H1 (cell line): ENCODE measurements at regions of chr15 and their contacts with region 1.

Region 1: GRCh38 chr15:66841953-66842681 is 140.1 kb downstream of the SMAD6 start:
- DNase-seq: no peak
- H3K4me3 ChIP-seq: peak overlapping the region; percentile 26 to 61 (median 37)
- H3K27ac ChIP-seq: no peak overlapping the region
- H3K4me1 ChIP-seq: peaks cover 0 to 9% (median 4%) of the 10 kb centered on the region in 4 experiments; a peak in 4 of 7 replicates
- H3K27me3 ChIP-seq: peaks cover 7 to 36% (median 29%) of the 10 kb centered on the region in 4 experiments
- CTCF ChIP-seq: no peak
- EP300 ChIP-seq: no peak
- POLR2A ChIP-seq: no peak
- RAD21 ChIP-seq: no peak

Region 2: DNA sequence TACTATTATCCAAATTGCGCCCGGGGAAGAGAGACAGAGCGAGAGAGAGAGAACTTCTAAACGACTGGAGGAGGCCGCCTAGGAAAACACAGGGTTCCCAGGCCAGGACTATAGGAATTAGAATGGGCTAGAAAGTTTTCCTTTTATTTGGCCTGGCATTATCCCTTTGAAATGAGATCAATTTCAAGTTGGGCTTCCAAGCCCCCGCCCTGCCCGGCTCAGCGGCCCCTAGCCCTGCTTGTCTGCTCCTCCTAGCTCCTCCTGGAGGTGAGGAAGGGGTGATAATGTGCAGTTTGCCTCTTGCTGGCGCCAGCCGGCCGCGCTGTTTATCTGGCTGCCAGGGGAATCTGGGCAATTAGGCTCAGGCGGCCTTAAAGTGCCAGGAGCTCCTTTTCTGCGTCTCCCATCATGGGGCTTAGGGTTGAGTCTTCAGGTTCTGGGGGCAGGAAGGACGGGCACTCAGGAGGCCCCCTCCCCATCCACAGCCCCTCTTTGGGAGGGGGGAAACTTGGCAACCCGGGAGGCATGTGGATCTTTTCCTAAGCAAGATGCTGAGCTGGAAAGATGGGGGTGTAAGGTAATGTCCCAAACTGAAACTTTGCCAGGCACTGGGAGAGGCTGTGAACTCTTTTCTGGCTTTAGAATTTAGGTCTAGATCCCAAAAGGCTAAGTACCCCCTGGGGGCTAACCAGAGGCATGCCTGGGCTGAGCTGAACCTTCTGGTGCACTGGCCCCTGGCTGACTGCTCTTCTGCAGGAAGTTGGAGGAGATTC is 134.6 kb before region 1 on chr15:
- CTCF ChIA-PET with region 1: interaction called, 11 read pairs
- POLR2A ChIA-PET with region 1: no interaction called
- DNase-seq: peak; percentile 70 to 74
- H3K4me3 ChIP-seq: no peak overlapping the region; a peak in 1 of 8 replicates
- H3K27ac ChIP-seq: no peak overlapping the region
- H3K4me1 ChIP-seq: peaks cover 0 to 25% (median 14%) of the 10 kb centered on the region in 4 experiments; a peak in 6 of 7 replicates
- H3K27me3 ChIP-seq: peaks cover 18 to 34% (median 27%) of the 10 kb centered on the region in 4 experiments; a peak in 6 of 7 replicates
- CTCF ChIP-seq: peak; percentile 57 to 72 (median 61)
- EP300 ChIP-seq: no peak
- POLR2A ChIP-seq: no peak
- RAD21 ChIP-seq: peak; percentile 53 to 70

Region 3: DNA sequence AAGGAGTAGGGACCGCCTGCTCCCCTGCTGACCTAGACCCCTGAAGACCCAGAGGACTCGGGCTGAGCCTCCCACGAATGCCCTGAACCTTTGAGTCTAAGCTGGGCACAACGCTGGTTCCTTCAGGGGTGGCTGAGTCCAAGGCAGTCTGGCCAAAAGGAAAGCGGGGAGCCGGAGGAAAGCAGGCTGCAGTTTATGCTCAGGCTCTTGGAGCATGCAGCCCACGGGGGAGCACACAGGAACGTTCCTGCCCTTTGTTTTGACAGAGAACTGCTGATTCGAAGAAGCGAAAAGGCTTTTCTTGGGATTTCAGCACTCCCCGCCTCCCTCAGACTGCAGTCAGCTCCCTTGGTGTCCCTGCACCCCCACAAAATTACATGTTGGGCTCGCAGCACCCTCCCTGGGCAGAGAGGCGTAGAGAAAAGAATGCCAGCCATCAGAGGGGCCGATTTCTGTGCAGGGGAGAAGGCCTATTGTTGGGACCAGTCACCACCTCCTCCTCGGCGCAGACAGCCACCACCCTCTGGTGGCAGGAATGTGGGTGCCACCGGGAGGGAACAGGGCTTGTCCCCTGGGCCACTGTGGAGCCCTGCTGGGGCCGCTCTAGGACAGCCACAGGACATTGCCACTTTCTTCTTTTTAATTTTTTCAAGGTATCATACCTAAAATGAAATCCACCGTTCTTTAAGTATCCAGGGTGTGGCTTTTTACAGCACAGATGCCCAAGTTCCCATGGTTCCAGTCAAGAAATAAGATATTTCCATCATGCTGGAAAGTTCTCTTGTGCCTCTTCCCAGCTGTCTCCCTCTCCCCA is 67.9 kb before region 1 on chr15:
- CTCF ChIA-PET with region 1: interaction called, 202 read pairs
- POLR2A ChIA-PET with region 1: no interaction called
- DNase-seq: peak; percentile 68 to 95
- H3K4me3 ChIP-seq: peak overlapping the region in 1 of 4 experiments; percentile 23; a peak in 3 of 8 replicates
- H3K27ac ChIP-seq: peak overlapping the region; percentile 56
- H3K4me1 ChIP-seq: peaks cover 11 to 24% (median 18%) of the 10 kb centered on the region in 4 experiments
- H3K27me3 ChIP-seq: no peaks in the 10 kb centered on the region
- CTCF ChIP-seq: peak; percentile 94 to 95 (median 95)
- EP300 ChIP-seq: peak in 1 of 2 experiments; percentile 60; a peak in 1 of 3 replicates
- POLR2A ChIP-seq: no peak
- RAD21 ChIP-seq: peak; percentile 87 to 92

Region 4: GRCh38 chr15:66808181-66808825 is 33.8 kb before region 1 on chr15:
- CTCF ChIA-PET with region 1: interaction called, 14 read pairs
- POLR2A ChIA-PET with region 1: no interaction called
- DNase-seq: no peak
- H3K4me3 ChIP-seq: no peak overlapping the region
- H3K27ac ChIP-seq: no peak overlapping the region
- H3K4me1 ChIP-seq: peaks cover 0 to 4% (median 4%) of the 10 kb centered on the region in 4 experiments; a peak in 4 of 7 replicates
- H3K27me3 ChIP-seq: peaks cover 0 to 2% (median 0%) of the 10 kb centered on the region in 4 experiments; a peak in 1 of 7 replicates
- CTCF ChIP-seq: no peak
- EP300 ChIP-seq: no peak
- POLR2A ChIP-seq: no peak
- RAD21 ChIP-seq: no peak

Region 5: DNA sequence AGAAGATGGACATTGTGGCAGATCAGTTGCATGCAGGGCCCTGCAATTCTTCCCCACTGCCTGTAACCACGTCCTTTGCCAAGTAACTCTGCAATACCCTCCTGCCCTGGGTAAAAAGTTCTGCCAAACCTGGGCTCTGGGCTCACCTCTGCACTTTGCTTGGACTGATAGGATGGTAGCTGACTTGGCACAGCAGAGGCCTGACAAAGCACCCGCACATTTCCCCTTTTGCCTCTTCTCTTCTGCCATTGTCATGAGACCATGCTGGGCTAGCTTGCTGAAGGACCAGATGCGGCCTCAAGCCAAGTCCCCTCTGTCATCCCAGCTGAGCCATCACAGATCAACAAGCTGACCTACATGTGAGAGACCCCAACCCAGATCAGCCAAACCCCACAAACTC is 17.7 kb before region 1 on chr15:
- CTCF ChIA-PET with region 1: interaction called, 42 read pairs
- POLR2A ChIA-PET with region 1: interaction called, 4 read pairs
- DNase-seq: no peak
- H3K4me3 ChIP-seq: no peak overlapping the region
- H3K27ac ChIP-seq: no peak overlapping the region
- H3K4me1 ChIP-seq: peaks cover 0 to 18% (median 7%) of the 10 kb centered on the region in 4 experiments; a peak in 6 of 7 replicates
- H3K27me3 ChIP-seq: no peaks in the 10 kb centered on the region
- CTCF ChIP-seq: no peak
- EP300 ChIP-seq: no peak
- POLR2A ChIP-seq: no peak
- RAD21 ChIP-seq: no peak

Region 6: DNA sequence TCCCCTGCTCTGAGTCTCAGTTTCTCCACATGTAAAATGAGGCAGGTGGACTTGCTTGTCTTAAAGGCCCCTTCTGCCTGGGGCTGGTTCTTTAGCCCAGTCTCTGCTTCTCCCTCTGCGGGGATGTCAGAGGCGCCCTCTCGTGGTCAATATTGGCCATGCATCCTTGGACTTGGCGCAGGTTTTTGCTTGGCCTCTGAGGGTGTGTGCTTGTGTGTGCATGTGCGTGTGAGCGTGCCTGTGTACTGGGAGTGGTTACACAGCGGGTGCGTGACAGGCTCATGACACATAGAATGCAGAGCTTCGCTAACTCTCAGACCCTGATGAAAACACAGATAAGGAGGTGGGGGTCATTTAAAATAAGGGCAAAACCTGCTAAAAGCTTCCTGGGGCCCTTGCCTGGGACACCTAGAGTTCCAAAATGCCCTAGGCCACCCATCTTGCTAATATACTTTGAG is 20.8 kb after region 1 on chr15:
- CTCF ChIA-PET with region 1: interaction called, 12 read pairs
- POLR2A ChIA-PET with region 1: no interaction called
- DNase-seq: peak; percentile 77 to 95
- H3K4me3 ChIP-seq: no peak overlapping the region
- H3K27ac ChIP-seq: no peak overlapping the region
- H3K4me1 ChIP-seq: peaks cover 0 to 6% (median 3%) of the 10 kb centered on the region in 4 experiments; a peak in 5 of 7 replicates
- H3K27me3 ChIP-seq: no peaks in the 10 kb centered on the region
- CTCF ChIP-seq: peak; percentile 90 to 96 (median 95)
- EP300 ChIP-seq: no peak
- POLR2A ChIP-seq: no peak
- RAD21 ChIP-seq: peak; percentile 80 to 83